ENCODE measurements at regions of chr1 and their contacts with region 1.

Region 1: DNA sequence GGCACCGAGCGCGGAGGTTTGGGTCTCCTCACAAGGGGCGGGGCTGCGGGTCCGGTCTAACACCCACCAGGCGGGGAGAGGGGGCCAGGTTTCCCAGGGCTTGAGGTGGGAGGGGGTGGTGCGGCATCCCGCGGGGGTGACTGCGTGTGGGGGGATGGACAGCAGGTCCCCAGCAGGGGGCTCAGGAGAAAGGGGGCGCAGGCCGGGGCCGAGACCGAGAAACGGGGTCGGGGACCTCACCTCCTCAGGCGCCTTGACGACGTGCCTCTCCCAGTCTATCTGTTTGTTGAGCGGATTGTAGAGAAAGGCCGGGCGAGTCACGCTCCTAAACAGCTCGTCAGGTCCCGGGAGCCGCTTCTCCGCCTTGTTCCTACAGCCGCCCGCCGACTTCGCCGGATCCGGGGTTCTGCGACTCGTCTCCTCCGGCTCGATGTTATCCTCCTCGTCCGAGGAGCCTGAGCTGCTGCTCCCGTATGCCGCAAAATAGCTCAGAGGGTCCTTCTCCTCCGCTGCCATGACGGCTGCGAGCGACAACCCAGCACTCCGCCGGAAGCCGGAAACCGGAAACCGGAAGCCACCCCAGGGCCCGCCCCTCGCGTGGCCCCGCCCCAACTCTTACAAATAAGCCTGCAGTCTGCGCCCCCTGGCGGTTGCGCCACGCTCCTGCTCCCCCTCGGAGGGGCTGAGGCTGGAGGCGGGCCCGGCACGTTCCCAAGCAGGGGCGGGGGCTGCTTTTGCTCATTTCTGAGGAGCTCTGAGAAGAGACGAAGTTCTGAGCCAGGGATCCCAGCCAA is at the start of gene C1orf52:
- DNase-seq: peak; percentile 99
- H3K4me3 Mint-ChIP-seq: peak within 1 kb of the TSS; percentile 96
- H3K27ac Mint-ChIP-seq: peak within 1 kb of the TSS; percentile 93
- H3K4me1 Mint-ChIP-seq: peaks cover 24% of the 10 kb centered on the region
- H3K27me3 Mint-ChIP-seq: no peaks in the 10 kb centered on the region
- total RNA-seq, gene C1orf52: 29.8 and 32.3 TPM in 2 replicates

Region 2: GRCh38 chr1:85048296-85049064 is 210.8 kb before region 1 on chr1 and contains the start of gene MCOLN3:
- intact Hi-C with region 1: loop called (anchors 2 kb)
- DNase-seq: peak; percentile 83
- H3K4me3 Mint-ChIP-seq: peak within 1 kb of the TSS; percentile 70
- H3K27ac Mint-ChIP-seq: peak within 1 kb of the TSS; percentile 21
- H3K4me1 Mint-ChIP-seq: peaks cover 26% of the 10 kb centered on the region
- H3K27me3 Mint-ChIP-seq: peaks cover 44% of the 10 kb centered on the region
- total RNA-seq, gene MCOLN3: 0.51 and 0.66 TPM in 2 replicates

Region 3: GRCh38 chr1:85061711-85062424 is 197.4 kb before region 1 on chr1:
- intact Hi-C with region 1: loop called (anchors 5 kb)
- DNase-seq: peak; percentile 97
- H3K4me3 Mint-ChIP-seq: peak overlapping the region; percentile 80
- H3K27ac Mint-ChIP-seq: peak overlapping the region; percentile 85
- H3K4me1 Mint-ChIP-seq: peaks cover 17% of the 10 kb centered on the region
- H3K27me3 Mint-ChIP-seq: peaks cover 35% of the 10 kb centered on the region

Region 4: GRCh38 chr1:85078903-85079302 is 180.4 kb before region 1 on chr1:
- intact Hi-C with region 1: no loop called
- DNase-seq: peak; percentile 62
- H3K4me3 Mint-ChIP-seq: no peak overlapping the region
- H3K27ac Mint-ChIP-seq: no peak overlapping the region
- H3K4me1 Mint-ChIP-seq: peaks cover 6% of the 10 kb centered on the region
- H3K27me3 Mint-ChIP-seq: peaks cover 34% of the 10 kb centered on the region

Region 5: GRCh38 chr1:85109475-85109874 is 149.8 kb before region 1 on chr1:
- intact Hi-C with region 1: loop called (anchors 1 kb)
- DNase-seq: peak; percentile 77
- H3K4me3 Mint-ChIP-seq: no peak overlapping the region
- H3K27ac Mint-ChIP-seq: no peak overlapping the region
- H3K4me1 Mint-ChIP-seq: no peaks in the 10 kb centered on the region
- H3K27me3 Mint-ChIP-seq: peaks cover 19% of the 10 kb centered on the region

Region 6: DNA sequence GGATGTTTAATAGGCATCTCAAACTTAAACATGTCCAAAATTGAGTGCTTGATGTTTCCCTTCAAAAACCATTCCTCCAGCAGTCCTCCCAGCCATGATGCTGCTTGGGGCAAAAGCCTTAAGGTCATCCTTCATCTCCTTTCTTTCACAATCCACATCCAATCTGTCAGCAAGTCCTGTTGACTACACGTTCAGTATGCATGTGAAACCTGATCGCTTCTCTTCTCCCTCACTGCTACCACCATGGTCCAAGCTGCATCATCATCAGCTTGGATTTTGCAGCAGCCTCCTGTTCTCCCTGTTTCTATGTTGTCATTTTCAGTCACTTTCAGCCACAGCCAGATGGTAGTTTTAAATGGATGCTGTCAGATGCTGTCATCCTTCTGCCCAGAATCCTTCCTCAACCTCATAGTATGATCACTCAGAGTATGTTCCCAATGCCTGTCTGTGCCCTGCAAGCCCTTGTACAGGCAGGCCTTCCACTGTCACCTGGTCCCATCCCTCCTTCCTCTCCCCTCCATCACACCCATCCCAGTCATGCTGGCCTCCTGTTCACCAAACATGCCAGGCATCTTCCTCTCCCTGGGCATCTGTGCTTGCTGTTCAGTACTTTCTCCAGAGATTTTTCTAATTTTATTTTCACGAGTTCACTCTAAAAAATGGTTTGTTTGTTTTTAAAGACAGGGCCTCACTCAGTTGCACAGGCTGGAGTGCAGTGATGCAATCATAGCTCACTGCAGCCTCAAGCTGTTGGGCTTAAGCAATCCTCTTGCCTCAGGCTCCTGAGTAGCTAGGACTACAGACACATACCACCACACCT is 124.5 kb before region 1 on chr1:
- intact Hi-C with region 1: no loop called
- DNase-seq: no peak
- H3K4me3 Mint-ChIP-seq: no peak overlapping the region
- H3K27ac Mint-ChIP-seq: no peak overlapping the region
- H3K4me1 Mint-ChIP-seq: no peaks in the 10 kb centered on the region
- H3K27me3 Mint-ChIP-seq: peaks cover 4% of the 10 kb centered on the region

Region 7: GRCh38 chr1:85200870-85201339 is 58.4 kb before region 1 on chr1 and contains the start of gene SYDE2:
- intact Hi-C with region 1: loop called (anchors 5 kb)
- DNase-seq: peak; percentile 94
- H3K4me3 Mint-ChIP-seq: peak within 1 kb of the TSS; percentile 94
- H3K27ac Mint-ChIP-seq: peak within 1 kb of the TSS; percentile 87
- H3K4me1 Mint-ChIP-seq: peaks cover 12% of the 10 kb centered on the region
- H3K27me3 Mint-ChIP-seq: peaks cover 39% of the 10 kb centered on the region
- total RNA-seq, gene SYDE2: 1.2 and 1.4 TPM in 2 replicates

Region 8: GRCh38 chr1:85219853-85220610 is 39.3 kb before region 1 on chr1:
- intact Hi-C with region 1: no loop called
- DNase-seq: no peak
- H3K4me3 Mint-ChIP-seq: no peak overlapping the region
- H3K27ac Mint-ChIP-seq: no peak overlapping the region
- H3K4me1 Mint-ChIP-seq: no peaks in the 10 kb centered on the region
- H3K27me3 Mint-ChIP-seq: peaks cover 36% of the 10 kb centered on the region

Region 9: GRCh38 chr1:85230305-85230980 is 28.9 kb before region 1 on chr1:
- intact Hi-C with region 1: no loop called
- DNase-seq: no peak
- H3K4me3 Mint-ChIP-seq: no peak overlapping the region
- H3K27ac Mint-ChIP-seq: no peak overlapping the region
- H3K4me1 Mint-ChIP-seq: no peaks in the 10 kb centered on the region
- H3K27me3 Mint-ChIP-seq: peaks cover 16% of the 10 kb centered on the region

Region 10: DNA sequence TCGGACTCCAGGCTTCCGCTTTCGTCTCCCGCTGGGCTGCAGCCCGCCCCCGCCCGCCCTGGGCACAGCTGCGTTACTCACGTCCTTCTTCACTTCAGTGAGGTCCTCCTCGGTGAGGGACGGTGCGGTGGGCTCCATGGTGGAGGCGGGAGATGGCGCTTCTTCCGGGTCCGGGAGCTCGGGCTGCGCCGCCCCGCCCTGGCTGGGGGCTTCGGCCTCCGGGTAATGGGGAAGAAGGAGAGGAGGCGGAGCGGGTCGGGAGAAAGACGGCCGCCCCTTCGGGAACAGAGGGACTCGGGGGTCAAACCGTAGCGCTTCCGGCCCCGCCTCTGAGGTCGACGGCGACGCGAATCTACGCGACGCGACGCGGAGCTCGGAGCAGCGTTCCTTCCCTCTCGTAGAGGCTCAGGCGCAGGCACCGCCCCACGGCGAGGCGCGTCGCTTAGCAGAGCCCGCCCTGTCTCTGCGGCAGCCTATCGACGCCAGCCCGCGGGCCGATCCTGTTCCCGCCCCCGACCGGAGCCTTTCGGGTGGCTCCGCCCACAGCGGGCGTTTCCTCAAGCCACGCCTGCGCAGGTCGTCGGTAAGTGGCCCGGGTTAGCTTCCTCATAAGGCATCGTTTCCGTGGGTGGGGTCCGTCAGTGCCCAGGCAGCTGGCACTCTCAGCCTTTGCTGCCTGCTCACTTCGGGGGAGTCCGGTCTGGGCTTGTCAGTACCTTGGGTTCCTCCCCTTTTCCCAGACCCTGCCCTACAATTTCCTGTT is 17.1 kb after region 1 on chr1 and contains the start of gene BCL10:
- intact Hi-C with region 1: loop called (anchors 1 kb)
- DNase-seq: peak; percentile 100
- H3K4me3 Mint-ChIP-seq: peak within 1 kb of the TSS; percentile 84
- H3K27ac Mint-ChIP-seq: peak within 1 kb of the TSS; percentile 91
- H3K4me1 Mint-ChIP-seq: peaks cover 46% of the 10 kb centered on the region
- H3K27me3 Mint-ChIP-seq: peaks cover 20% of the 10 kb centered on the region
- total RNA-seq, gene BCL10: 25.5 and 27.8 TPM in 2 replicates

Region 11: GRCh38 chr1:85297855-85298629 is 38.7 kb after region 1 on chr1:
- intact Hi-C with region 1: loop called (anchors 1 kb)
- DNase-seq: peak; percentile 82
- H3K4me3 Mint-ChIP-seq: peak overlapping the region; percentile 56
- H3K27ac Mint-ChIP-seq: peak overlapping the region; percentile 86
- H3K4me1 Mint-ChIP-seq: peaks cover 25% of the 10 kb centered on the region
- H3K27me3 Mint-ChIP-seq: peaks cover 49% of the 10 kb centered on the region